ENCODE measurements at regions of chr14 and their contacts with region 1.

Region 1: DNA sequence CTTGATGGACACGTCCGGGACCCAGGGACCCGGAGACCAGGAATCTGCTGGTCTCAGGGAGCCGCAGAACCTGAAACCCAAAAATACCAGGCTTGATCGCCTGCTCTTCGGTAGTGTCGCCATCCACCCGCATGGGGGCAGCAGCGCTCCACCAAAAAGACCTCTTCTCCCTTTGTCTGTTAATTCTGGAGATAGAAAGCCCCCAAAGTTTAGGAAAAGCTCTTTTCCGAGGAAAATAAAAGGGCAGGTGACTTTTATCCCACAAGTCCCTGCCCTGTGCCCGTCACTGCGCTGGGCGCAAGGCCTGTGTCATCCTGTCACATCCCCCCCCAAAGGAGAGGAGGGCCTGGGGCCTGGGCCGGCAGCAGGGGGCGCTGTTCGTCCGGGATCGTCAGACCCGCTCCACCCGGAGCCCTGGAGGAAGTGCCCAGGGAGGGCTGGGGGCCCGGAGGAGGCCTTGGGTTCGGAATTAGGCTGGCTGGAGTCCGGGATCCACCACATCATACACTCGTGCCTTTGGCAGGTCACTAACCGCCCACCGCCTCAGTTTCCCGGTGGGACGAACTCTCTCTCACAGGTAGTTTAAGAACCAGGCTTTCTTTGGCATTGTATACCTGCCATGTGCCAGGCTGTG is 31.9 kb downstream of the DAD1 start:
- DNase-seq: peak; percentile 87 to 96 (median 91)
- H3K4me3 ChIP-seq: peak overlapping the region; percentile 80 to 85
- H3K4me3 Mint-ChIP-seq: peak overlapping the region; percentile 77 to 96 (median 88)
- H3K27ac ChIP-seq: peak overlapping the region; percentile 97
- H3K27ac Mint-ChIP-seq: peak overlapping the region; percentile 98 to 100 (median 100)
- H3K4me1 ChIP-seq: peaks cover 97% of the 10 kb centered on the region
- H3K4me1 Mint-ChIP-seq: peaks cover 75 to 97% (median 86%) of the 10 kb centered on the region in 4 donors
- H3K27me3 ChIP-seq: no peaks in the 10 kb centered on the region
- H3K27me3 Mint-ChIP-seq: peaks cover 2 to 4% of the 10 kb centered on the region in 2 donors

Region 2: DNA sequence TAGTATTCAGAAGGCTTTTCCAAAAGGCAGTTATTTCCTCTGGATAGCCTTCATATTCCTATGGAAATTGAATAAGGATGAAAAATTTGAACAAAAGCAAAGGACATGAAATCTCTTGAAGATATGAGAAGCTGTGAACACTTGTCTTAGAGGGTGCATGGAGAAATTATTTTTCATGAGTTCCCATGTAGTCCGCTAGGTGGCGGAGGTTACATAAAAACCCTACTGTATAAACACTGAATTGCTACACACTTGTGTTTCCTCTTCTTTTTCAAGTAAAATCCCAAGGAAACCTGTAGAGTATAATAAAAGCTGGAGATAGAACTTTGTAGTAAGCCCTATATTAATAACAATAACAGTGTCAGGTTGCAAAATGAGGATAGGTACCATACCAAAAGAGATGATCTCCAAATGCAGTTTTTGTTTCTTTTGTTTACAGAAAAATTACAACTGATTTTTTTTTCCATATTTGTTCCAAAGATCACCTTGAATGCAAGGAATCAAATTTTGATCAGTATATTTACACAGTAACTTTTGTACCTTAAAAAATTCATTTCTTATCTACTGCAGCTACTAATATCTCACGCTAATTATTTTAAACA is 845.6 kb before region 1 on chr14:
- CTCF ChIA-PET with region 1: no interaction called
- POLR2A ChIA-PET with region 1: interaction called, 8 read pairs
- intact Hi-C with region 1: loop called (anchors 5 kb)
- DNase-seq: peak in 2 of 5 donors; percentile 35 to 43
- H3K4me3 ChIP-seq: no peak overlapping the region
- H3K4me3 Mint-ChIP-seq: peak overlapping the region in 6 of 8 donors; percentile 7 to 74 (median 60)
- H3K27ac ChIP-seq: peak overlapping the region; percentile 1
- H3K27ac Mint-ChIP-seq: peak overlapping the region in 4 of 7 donors; percentile 56 to 84 (median 80)
- H3K4me1 ChIP-seq: no peaks in the 10 kb centered on the region
- H3K4me1 Mint-ChIP-seq: peaks cover 0 to 15% (median 3%) of the 10 kb centered on the region in 4 donors
- H3K27me3 ChIP-seq: no peaks in the 10 kb centered on the region
- H3K27me3 Mint-ChIP-seq: peaks cover 12 to 23% of the 10 kb centered on the region in 2 donors

Region 3: GRCh38 chr14:21860172-21860571 is 696.9 kb before region 1 on chr14:
- CTCF ChIA-PET with region 1: interaction called, 4 read pairs
- POLR2A ChIA-PET with region 1: interaction called, 26 read pairs
- intact Hi-C with region 1: loop called (anchors 1 kb)
- DNase-seq: peak in 4 of 5 donors; percentile 47 to 55 (median 52)
- H3K4me3 ChIP-seq: no peak overlapping the region
- H3K4me3 Mint-ChIP-seq: peak overlapping the region; percentile 49 to 82 (median 72)
- H3K27ac ChIP-seq: peak overlapping the region; percentile 2
- H3K27ac Mint-ChIP-seq: peak overlapping the region; percentile 4 to 92 (median 74)
- H3K4me1 ChIP-seq: peaks cover 8% of the 10 kb centered on the region
- H3K4me1 Mint-ChIP-seq: peaks cover 5 to 20% (median 12%) of the 10 kb centered on the region in 4 donors
- H3K27me3 ChIP-seq: no peaks in the 10 kb centered on the region
- H3K27me3 Mint-ChIP-seq: peaks cover 2 to 3% of the 10 kb centered on the region in 2 donors

Region 4: DNA sequence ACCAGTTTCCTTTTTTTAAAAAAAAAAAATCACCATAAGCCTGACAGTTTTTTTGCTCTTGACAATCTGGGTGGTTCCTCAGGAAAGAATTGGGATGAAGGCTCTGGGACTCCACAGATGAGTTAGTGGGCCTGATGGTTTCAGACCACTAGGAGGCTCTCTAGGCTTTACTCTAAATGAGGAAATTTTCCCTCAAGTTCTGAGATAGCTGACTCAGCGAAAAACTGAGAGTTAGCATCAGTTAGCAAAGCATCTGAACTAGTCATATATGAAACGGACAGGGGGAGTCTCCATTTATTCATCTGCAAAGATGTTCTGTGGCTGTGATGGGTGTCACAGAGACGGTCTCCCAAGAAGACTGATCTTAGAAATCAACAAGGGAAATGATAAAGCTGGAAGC is 569.2 kb before region 1 on chr14:
- CTCF ChIA-PET with region 1: interaction called, 9 read pairs
- POLR2A ChIA-PET with region 1: interaction called, 43 read pairs
- intact Hi-C with region 1: loop called (anchors 1 kb)
- DNase-seq: peak in 1 of 5 donors; percentile 24
- H3K4me3 ChIP-seq: no peak overlapping the region
- H3K4me3 Mint-ChIP-seq: peak overlapping the region in 1 of 8 donors; percentile 44
- H3K27ac ChIP-seq: no peak overlapping the region
- H3K27ac Mint-ChIP-seq: peak overlapping the region in 3 of 7 donors; percentile 6 to 70 (median 35)
- H3K4me1 ChIP-seq: no peaks in the 10 kb centered on the region
- H3K4me1 Mint-ChIP-seq: peaks cover 4 to 7% (median 6%) of the 10 kb centered on the region in 4 donors
- H3K27me3 ChIP-seq: no peaks in the 10 kb centered on the region
- H3K27me3 Mint-ChIP-seq: peaks cover 0 to 4% of the 10 kb centered on the region in 2 donors

Region 5: DNA sequence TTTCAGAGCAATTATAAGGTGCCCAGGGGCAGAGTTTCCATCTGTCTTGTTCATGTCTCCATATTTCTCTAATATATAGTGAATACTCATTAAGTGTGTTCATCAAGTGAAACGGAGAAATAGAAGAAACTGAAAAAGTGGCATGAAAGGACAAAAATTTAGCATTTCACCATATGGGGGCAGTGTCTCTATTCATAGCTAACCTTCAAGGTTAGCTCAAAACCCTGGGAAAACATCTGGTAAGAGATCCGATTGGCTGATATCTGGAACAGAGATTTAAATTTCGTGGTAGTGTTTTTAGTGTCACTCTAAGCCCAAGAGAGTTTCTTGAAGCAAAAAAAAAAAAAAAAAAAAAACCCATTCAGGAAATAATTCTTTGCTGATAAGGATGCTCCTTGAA is 335.6 kb before region 1 on chr14:
- CTCF ChIA-PET with region 1: interaction called, 3 read pairs
- POLR2A ChIA-PET with region 1: interaction called, 17 read pairs
- intact Hi-C with region 1: loop called (anchors 2 kb)
- DNase-seq: peak in 1 of 5 donors; percentile 21
- H3K4me3 ChIP-seq: no peak overlapping the region
- H3K4me3 Mint-ChIP-seq: peak overlapping the region in 7 of 8 donors; percentile 54 to 76 (median 67)
- H3K27ac ChIP-seq: no peak overlapping the region
- H3K27ac Mint-ChIP-seq: peak overlapping the region in 3 of 7 donors; percentile 67 to 84 (median 70)
- H3K4me1 ChIP-seq: no peaks in the 10 kb centered on the region
- H3K4me1 Mint-ChIP-seq: peaks cover 1 to 7% (median 6%) of the 10 kb centered on the region in 4 donors
- H3K27me3 ChIP-seq: no peaks in the 10 kb centered on the region
- H3K27me3 Mint-ChIP-seq: no peaks in the 10 kb centered on the region

Region 6: GRCh38 chr14:22536853-22537338 is 20.2 kb before region 1 on chr14:
- CTCF ChIA-PET with region 1: interaction called, 81 read pairs
- POLR2A ChIA-PET with region 1: interaction called, 1,762 read pairs
- intact Hi-C with region 1: no loop called
- DNase-seq: peak in 4 of 5 donors; percentile 54 to 97 (median 62)
- H3K4me3 ChIP-seq: peak overlapping the region; percentile 13 to 46
- H3K4me3 Mint-ChIP-seq: peak overlapping the region; percentile 69 to 91 (median 85)
- H3K27ac ChIP-seq: peak overlapping the region; percentile 72
- H3K27ac Mint-ChIP-seq: peak overlapping the region; percentile 92 to 100 (median 98)
- H3K4me1 ChIP-seq: peaks cover 99% of the 10 kb centered on the region
- H3K4me1 Mint-ChIP-seq: peaks cover 86 to 100% (median 91%) of the 10 kb centered on the region in 4 donors
- H3K27me3 ChIP-seq: no peaks in the 10 kb centered on the region
- H3K27me3 Mint-ChIP-seq: no peaks in the 10 kb centered on the region

Region 7: DNA sequence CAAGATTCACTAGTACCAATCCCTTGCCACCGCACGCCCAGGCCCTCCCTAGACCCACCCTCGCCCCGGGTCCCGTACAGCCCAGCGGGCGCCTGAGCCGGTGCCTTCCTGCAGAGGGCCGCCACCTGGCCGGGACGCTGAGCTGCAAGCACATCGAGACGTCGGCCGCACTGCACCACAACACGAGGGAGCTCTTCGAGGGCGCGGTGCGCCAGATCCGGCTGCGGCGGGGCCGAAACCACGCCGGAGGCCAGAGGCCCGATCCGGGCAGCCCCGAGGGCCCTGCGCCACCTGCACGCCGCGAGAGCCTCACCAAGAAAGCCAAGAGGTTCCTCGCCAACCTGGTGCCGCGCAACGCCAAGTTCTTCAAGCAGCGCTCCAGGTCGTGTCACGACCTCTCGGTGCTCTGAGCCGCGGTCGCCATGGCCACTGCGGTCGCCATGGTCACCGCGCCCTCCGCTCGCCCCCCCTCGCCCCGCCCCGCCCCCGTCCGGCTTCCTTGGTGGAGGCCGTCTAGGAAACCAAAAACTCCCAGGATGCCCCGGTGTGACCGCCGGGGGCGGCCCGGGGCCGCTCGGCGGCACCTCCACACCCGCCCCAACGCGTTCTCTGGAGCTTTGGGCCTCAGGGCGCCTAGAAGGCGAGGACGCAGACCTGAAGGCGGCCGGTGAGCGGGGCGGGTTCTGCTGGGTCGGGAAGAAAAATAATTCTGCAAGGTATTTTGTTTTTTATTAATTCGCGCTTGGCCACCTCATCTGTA is 329.6 kb after region 1 on chr14:
- CTCF ChIA-PET with region 1: no interaction called
- POLR2A ChIA-PET with region 1: interaction called, 10 read pairs
- intact Hi-C with region 1: no loop called
- DNase-seq: peak; percentile 73 to 85 (median 78)
- H3K4me3 ChIP-seq: peak overlapping the region; percentile 24 to 30
- H3K4me3 Mint-ChIP-seq: peak overlapping the region; percentile 87 to 97 (median 94)
- H3K27ac ChIP-seq: peak overlapping the region; percentile 68
- H3K27ac Mint-ChIP-seq: peak overlapping the region; percentile 93 to 99 (median 97)
- H3K4me1 ChIP-seq: peaks cover 57% of the 10 kb centered on the region
- H3K4me1 Mint-ChIP-seq: peaks cover 34 to 85% (median 59%) of the 10 kb centered on the region in 4 donors
- H3K27me3 ChIP-seq: no peaks in the 10 kb centered on the region
- H3K27me3 Mint-ChIP-seq: no peaks in the 10 kb centered on the region

Measured in CD4-positive, alpha-beta memory T cell (primary cell).